Heart right ventricle (tissue), 16 donors: ENCODE measurements at regions of chr3 and their contacts with region 1.

Region 1: DNA sequence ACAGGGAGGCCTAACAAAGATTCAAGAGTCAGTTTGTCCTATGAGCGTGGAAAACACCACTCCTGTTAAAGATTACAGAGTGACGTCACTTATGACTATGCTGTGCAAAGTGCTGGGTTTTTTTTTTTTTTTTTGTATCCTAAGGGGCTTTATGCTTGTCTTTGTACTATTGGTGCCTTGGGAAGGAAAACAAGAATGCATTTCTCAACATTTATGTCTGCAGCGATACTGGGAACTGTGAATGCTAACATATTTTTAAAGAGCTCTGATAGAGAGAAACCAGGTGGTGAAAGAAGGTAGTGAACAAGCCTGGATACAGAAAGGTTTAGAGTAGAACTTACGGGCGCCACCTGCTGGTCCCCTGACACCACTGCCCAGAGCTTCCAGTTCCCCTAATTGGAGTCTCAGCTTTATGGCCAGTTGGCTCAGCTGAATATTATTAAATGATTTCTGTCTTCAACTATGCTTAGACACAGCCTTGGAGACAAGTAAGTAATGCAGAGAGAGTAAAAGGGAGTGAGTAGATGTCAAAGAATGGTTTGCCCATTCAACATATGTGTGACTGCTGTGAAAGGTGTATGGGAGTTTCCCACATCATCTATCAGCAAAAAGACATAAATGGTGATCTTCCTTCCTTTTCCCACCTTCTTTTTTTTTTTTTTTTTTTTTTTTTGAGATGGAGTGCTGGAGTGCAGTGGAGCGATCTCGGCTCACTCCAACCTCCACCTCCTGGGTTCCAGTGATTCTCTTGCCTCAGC is 807.9 kb upstream of the CFAP20DC start:
- DNase-seq: peak; percentile 78 to 80
- ATAC-seq: peak in 7 of 8 donors; percentile 89 to 97 (median 94)
- H3K4me3 ChIP-seq: peak overlapping the region in 1 of 10 donors; percentile 24
- H3K27ac ChIP-seq: no peak overlapping the region
- H3K4me1 ChIP-seq: peaks cover 0 to 7% (median 0%) of the 10 kb centered on the region in 9 donors
- H3K27me3 ChIP-seq: no peaks in the 10 kb centered on the region
- CTCF ChIP-seq: peak; percentile 77 to 96 (median 90)

Region 2: DNA sequence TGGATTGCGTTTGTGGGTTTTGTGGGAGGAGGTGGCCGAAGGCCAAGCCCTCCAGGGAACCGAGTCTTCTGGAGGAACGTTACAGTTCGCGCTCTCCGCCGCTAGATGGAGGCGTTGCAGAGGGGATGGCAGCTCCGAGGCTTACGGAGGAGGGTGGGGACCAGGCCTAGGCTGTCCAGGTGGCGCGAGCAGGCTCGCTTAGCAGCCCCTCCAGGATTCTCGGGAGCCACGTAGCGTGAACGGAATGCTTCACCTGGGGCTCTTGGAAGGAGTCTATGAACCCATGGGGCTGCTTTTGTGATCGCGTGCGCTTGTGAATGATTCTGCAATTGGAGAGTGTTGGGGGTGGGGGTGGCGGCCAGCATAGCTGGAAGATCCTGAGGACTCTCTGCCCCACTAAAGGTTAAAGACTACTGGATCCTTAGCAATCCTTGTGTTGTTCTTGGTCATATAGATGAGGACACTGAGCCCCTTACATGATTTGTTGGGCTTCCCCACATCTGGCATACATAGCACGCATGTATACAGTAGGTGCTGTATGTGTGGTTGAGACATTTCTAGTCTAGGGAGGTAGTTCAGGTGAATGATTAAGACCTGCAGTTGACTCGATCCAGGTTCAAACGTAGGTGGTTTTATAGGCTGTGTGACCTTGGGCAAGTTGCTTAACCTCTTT is 1216.9 kb before region 1 on chr3:
- intact Hi-C with region 1: loop called in 1 of 10 experiments (anchors 10 kb)
- DNase-seq: peak; percentile 64 to 81
- ATAC-seq: peak; percentile 84 to 94 (median 88)
- H3K4me3 ChIP-seq: no peak overlapping the region
- H3K27ac ChIP-seq: no peak overlapping the region
- H3K4me1 ChIP-seq: peaks cover 0 to 6% (median 0%) of the 10 kb centered on the region in 9 donors
- H3K27me3 ChIP-seq: peaks cover 0 to 7% (median 0%) of the 10 kb centered on the region in 7 donors
- CTCF ChIP-seq: peak; percentile 67 to 93 (median 87)

Region 3: GRCh38 chr3:59212128-59212779 is 645.5 kb before region 1 on chr3:
- intact Hi-C with region 1: loop called in 9 of 10 experiments (anchors 2 to 10 kb)
- DNase-seq: no peak
- ATAC-seq: peak in 7 of 8 donors; percentile 52 to 76 (median 61)
- H3K4me3 ChIP-seq: no peak overlapping the region
- H3K27ac ChIP-seq: no peak overlapping the region
- H3K4me1 ChIP-seq: no peaks in the 10 kb centered on the region
- H3K27me3 ChIP-seq: peaks cover 0 to 4% (median 0%) of the 10 kb centered on the region in 7 donors
- CTCF ChIP-seq: peak; percentile 38 to 73 (median 64)

Region 4: GRCh38 chr3:59575113-59576001 is 282.4 kb before region 1 on chr3:
- intact Hi-C with region 1: loop called (anchors 1 to 10 kb)
- DNase-seq: peak; percentile 81 to 84
- ATAC-seq: peak; percentile 73 to 87 (median 81)
- H3K4me3 ChIP-seq: no peak overlapping the region
- H3K27ac ChIP-seq: no peak overlapping the region
- H3K4me1 ChIP-seq: peaks cover 0 to 18% (median 0%) of the 10 kb centered on the region in 9 donors
- H3K27me3 ChIP-seq: no peaks in the 10 kb centered on the region
- CTCF ChIP-seq: peak; percentile 87 to 98 (median 96)

Region 5: GRCh38 chr3:59704292-59704691 is 153.5 kb before region 1 on chr3:
- intact Hi-C with region 1: loop called in 1 of 10 experiments (anchors 5 kb)
- DNase-seq: no peak
- ATAC-seq: no peak
- H3K4me3 ChIP-seq: no peak overlapping the region
- H3K27ac ChIP-seq: no peak overlapping the region
- H3K4me1 ChIP-seq: peaks cover 0 to 2% (median 0%) of the 10 kb centered on the region in 9 donors
- H3K27me3 ChIP-seq: no peaks in the 10 kb centered on the region
- CTCF ChIP-seq: no peak

Region 6: GRCh38 chr3:60000311-60001105 is 142.7 kb after region 1 on chr3:
- intact Hi-C with region 1: no loop called
- DNase-seq: no peak
- ATAC-seq: no peak
- H3K4me3 ChIP-seq: no peak overlapping the region
- H3K27ac ChIP-seq: no peak overlapping the region
- H3K4me1 ChIP-seq: no peaks in the 10 kb centered on the region
- H3K27me3 ChIP-seq: no peaks in the 10 kb centered on the region
- CTCF ChIP-seq: no peak

Region 7: GRCh38 chr3:60025096-60026050 is 167.6 kb after region 1 on chr3:
- intact Hi-C with region 1: no loop called
- DNase-seq: no peak
- ATAC-seq: no peak
- H3K4me3 ChIP-seq: no peak overlapping the region
- H3K27ac ChIP-seq: no peak overlapping the region
- H3K4me1 ChIP-seq: peaks cover 0 to 3% (median 0%) of the 10 kb centered on the region in 9 donors
- H3K27me3 ChIP-seq: no peaks in the 10 kb centered on the region
- CTCF ChIP-seq: no peak

Region 8: GRCh38 chr3:60475096-60475495 is 617.3 kb after region 1 on chr3:
- intact Hi-C with region 1: no loop called
- DNase-seq: no peak
- ATAC-seq: no peak
- H3K4me3 ChIP-seq: no peak overlapping the region
- H3K27ac ChIP-seq: no peak overlapping the region
- H3K4me1 ChIP-seq: peaks cover 0 to 10% (median 0%) of the 10 kb centered on the region in 9 donors
- H3K27me3 ChIP-seq: no peaks in the 10 kb centered on the region
- CTCF ChIP-seq: no peak

Region 9: DNA sequence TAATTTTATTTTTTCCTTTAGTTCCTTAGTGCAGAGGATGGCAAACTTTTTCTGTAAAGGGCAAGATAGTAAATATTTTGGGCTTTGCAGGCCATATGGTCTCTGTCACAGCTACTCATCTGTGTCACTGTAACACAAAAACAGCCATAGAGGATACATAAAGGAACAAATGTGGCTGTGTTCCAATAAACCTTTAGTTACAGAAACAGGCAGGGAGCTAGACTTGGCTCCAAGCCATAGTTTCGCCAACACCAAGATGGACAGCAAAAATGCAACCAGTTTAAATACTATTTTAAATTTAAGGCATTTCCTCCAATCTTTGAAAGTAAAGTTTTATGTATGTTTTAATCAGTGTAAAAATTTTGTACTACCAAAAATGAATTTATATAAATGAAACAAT is 640.1 kb after region 1 on chr3:
- intact Hi-C with region 1: no loop called
- DNase-seq: no peak
- ATAC-seq: no peak
- H3K4me3 ChIP-seq: no peak overlapping the region
- H3K27ac ChIP-seq: no peak overlapping the region
- H3K4me1 ChIP-seq: no peaks in the 10 kb centered on the region
- H3K27me3 ChIP-seq: no peaks in the 10 kb centered on the region
- CTCF ChIP-seq: no peak